Head of caudate nucleus (tissue), 42 donors: ENCODE measurements at regions of chr6 and their contacts with region 1.

Region 1: DNA sequence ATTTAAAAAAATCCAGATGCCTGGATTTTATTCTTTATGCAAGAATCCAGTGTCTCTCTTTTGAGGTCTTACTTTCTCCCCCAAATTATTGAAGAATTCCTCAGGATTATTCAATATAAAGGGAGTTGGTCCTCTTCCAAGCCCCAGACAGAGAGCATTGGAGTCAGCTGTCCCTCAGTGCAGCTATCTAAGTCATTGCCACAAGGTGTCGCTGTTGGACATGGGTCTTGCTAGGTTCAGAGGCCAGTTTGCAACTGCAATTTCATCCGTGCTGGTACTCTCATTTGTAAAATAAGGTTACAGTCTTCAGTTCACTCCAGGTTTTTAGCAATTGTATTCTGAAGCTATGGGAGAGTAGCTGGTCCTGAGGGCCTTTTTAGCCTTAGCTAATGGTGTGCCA is 27.8 kb downstream of the CCN2 start:
- DNase-seq: peak in 32 of 42 donors; percentile 4 to 80 (median 42)

Region 2: DNA sequence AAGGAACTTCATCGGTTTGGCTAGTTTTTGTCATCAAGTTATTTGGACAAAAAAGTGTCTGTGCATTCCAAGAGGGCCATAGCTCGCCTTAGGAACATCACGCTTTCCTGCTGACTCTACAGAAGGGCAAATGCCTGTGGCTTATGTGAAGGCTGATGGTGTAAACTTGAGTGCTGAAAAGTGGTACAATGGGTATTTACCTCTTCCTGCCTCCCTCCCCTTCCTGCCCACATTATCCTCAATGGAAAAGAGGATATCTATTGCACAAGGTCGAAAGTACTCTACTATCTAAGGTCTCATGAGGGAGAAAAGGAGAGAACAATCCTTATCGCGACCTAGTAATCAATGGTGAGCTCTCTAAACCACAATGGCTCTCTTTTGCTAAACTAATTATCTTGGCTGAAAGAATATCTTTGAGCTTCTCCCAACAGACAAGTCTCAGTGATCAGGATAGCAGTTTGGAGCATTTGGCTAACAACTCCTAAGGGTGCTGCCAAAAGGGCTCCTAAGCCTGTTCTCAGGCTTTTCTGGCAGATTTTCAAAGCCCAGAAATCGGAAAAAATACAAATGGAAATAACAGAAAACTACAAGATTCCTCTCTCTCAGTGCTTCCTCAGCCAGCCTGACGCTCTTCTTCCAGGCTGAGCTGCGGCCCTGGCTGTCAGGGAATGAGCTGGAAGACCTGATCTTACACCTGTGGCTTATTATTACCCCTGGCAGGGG is 158.1 kb before region 1 on chr6:
- intact Hi-C with region 1: no loop called
- DNase-seq: no peak

Region 3: GRCh38 chr6:131819572-131820124 is 103.7 kb before region 1 on chr6:
- intact Hi-C with region 1: no loop called
- DNase-seq: peak in 1 of 42 donors; percentile 15

Region 4: DNA sequence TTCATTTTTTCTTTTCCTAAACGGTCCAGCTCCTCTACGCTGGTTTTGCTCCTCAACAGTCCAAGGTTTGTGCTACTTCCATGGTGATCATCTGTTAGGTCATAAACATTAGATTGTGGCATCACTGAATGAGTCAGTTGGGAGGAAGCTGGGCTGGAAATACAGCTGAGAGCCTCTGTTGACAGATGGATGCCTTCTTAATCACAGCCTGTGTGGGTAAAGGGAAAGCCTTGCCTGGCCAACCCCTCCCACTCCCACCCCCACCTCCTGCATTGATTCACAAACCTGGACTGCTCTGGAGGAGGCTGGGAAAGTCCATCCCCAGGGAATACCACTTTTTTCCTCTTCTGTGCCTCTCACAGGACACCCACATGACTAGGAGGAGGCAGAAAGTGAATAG is 208.4 kb after region 1 on chr6:
- intact Hi-C with region 1: no loop called
- DNase-seq: no peak

Region 5: GRCh38 chr6:132218059-132218696 is 294.8 kb after region 1 on chr6:
- intact Hi-C with region 1: loop called (anchors 5 kb)
- DNase-seq: no peak